Sigmoid colon (tissue), 7 donors: ENCODE measurements at regions of chr1 and their contacts with region 1.

Region 1: GRCh38 chr1:231421993-231422764 is at the start of gene EGLN1:
- DNase-seq: peak; percentile 91
- H3K4me3 ChIP-seq: peak within 1 kb of the TSS; percentile 66 to 90 (median 88)
- H3K27ac ChIP-seq: peak within 1 kb of the TSS; percentile 98 to 99 (median 98)
- H3K4me1 ChIP-seq: peaks cover 0 to 43% (median 36%) of the 10 kb centered on the region in 4 donors
- H3K27me3 ChIP-seq: no peaks in the 10 kb centered on the region
- CTCF ChIP-seq: no peak
- EP300 ChIP-seq: no peak
- POLR2A ChIP-seq: peak; percentile 50 to 61
- total RNA-seq, gene EGLN1: 37.8 to 51.7 (median 46.0) TPM

Region 2: DNA sequence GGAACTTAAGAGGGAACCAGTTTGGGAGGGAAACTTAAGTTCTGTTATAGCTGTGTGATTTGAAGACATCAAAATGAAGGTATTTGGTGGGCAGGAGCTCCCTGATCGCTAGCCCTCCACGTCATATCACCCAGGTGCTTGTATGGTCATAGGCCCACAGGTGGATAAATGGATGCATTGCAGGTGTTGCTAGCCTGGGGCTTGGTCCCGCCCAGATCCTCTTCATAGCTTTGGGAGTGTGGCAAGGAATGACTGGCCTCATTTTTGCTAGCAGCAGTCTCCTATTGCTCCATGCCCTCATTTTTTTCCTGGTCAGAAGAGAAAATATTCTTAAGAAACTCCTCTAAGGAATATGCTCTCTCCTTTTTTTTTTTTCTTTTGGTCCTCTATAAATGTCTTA is 169.8 kb before region 1 on chr1:
- intact Hi-C with region 1: no loop called
- DNase-seq: no peak
- H3K4me3 ChIP-seq: no peak overlapping the region
- H3K27ac ChIP-seq: no peak overlapping the region
- H3K4me1 ChIP-seq: no peaks in the 10 kb centered on the region
- H3K27me3 ChIP-seq: no peaks in the 10 kb centered on the region
- CTCF ChIP-seq: no peak
- EP300 ChIP-seq: no peak
- POLR2A ChIP-seq: no peak

Region 3: DNA sequence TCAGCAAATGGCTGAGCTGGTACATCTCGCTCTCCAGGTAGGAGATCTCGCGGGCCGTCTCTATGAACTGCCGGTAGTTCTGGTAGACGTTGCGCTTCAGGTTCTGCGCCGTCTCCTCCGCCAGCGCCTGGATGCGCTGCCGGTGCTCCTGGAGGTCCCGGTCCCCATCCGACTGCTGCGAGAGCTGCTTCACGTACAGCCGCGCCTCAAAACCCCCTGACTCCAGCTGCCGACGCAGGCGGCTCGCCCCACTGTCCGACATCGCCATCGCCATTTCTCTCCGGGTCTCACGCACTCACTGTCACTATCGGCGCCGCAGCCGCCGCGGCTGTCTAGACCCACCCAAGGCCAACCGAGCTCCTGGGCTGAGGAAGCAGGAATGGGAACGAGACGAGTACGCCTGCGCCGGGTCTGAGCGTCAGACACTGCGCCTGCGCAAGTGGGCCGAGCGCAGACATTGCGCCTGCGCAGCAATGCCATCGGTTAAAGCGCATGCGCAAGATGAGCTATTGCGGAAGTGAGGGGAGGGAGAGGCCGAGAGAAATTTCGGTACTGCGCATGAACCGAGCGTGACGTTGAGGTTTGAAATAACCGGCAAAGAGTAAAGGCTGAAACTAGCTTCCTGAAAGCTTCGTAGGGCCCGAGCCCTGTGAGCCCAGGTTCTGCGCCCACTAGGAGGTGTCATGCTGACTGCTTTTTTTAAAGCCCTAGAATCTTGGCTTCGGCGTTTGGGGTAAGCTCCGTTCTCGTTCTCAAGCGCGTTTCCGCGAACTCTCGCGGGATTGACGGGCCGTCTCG is 84.5 kb before region 1 on chr1 and contains the start of gene EXOC8:
- intact Hi-C with region 1: loop called (anchors 2 kb)
- DNase-seq: peak; percentile 97
- H3K4me3 ChIP-seq: peak within 1 kb of the TSS; percentile 69 to 94 (median 81)
- H3K27ac ChIP-seq: peak within 1 kb of the TSS; percentile 88 to 96 (median 92)
- H3K4me1 ChIP-seq: peaks cover 0 to 60% (median 52%) of the 10 kb centered on the region in 4 donors
- H3K27me3 ChIP-seq: no peaks in the 10 kb centered on the region
- CTCF ChIP-seq: no peak
- EP300 ChIP-seq: no peak
- POLR2A ChIP-seq: peak; percentile 86 to 87
- total RNA-seq, gene EXOC8: 9.5 to 11.7 (median 11.3) TPM

Region 4: DNA sequence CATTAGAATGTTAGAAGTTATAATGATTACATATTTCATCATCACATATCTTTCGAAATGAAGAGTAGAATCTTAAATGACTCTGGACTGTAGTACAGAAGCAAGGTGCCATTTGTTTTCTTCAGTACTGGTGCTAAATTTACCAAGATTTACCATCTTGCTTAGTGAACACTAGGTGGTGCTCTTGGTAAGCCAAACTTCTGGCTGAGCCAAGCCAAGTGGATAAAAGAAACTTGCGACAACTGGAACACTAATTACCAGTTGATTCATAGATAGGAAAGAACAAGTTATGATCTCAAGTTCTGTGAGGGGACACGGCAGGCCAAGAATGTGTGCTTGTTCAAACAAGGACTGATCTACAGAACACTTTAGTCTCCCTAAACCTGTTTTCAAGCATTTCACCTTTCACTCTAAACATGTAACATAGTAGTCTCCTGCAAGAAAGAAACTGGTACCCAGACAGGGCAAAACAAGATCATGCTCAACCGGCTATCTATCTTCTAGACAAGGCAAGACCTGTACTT is 64.3 kb before region 1 on chr1:
- intact Hi-C with region 1: loop called (anchors 2 kb)
- DNase-seq: peak; percentile 75
- H3K4me3 ChIP-seq: no peak overlapping the region
- H3K27ac ChIP-seq: peak overlapping the region in 3 of 4 donors; percentile 4 to 43 (median 33)
- H3K4me1 ChIP-seq: peaks cover 0 to 14% (median 8%) of the 10 kb centered on the region in 4 donors
- H3K27me3 ChIP-seq: no peaks in the 10 kb centered on the region
- CTCF ChIP-seq: peak; percentile 68 to 82 (median 71)
- EP300 ChIP-seq: no peak
- POLR2A ChIP-seq: no peak

Region 5: DNA sequence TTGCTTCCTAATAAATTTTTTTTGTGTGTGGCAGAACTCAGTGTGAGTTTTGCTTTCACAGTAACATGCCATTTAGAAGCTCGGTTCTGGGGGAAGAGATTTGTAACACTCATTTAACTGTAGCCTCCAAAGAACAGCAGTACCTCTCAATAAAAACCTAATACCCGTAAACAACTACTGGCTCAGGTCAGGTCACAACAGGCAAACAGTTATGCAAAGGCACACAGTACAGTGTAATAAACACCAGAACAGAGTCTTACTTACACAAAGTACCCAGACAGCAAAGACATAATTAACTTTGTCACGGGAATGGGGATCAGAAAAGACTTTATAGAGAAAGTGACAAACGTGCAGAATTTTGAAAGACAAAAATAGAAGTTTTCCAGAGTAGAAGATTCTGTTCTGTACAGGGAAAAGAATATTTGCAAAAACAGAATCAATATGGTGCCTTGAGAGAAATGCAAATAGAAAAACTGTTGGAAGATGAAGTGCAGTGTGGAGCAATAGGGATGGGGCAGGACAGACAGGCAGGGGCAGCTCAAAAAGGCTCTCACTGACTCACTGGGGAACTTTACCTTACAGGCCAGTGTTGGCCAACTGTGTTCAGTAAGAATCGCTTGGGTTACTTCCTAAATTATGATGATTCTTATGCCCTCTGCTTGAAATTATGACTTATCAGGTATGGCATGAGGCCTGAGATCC is 38.9 kb before region 1 on chr1:
- intact Hi-C with region 1: loop called (anchors 5 kb)
- DNase-seq: no peak
- H3K4me3 ChIP-seq: no peak overlapping the region
- H3K27ac ChIP-seq: peak overlapping the region in 2 of 4 donors; percentile 2 to 27
- H3K4me1 ChIP-seq: peaks cover 0 to 79% (median 32%) of the 10 kb centered on the region in 4 donors
- H3K27me3 ChIP-seq: no peaks in the 10 kb centered on the region
- CTCF ChIP-seq: no peak
- EP300 ChIP-seq: no peak
- POLR2A ChIP-seq: no peak

Region 6: GRCh38 chr1:231590453-231591198 is 168.4 kb after region 1 on chr1:
- intact Hi-C with region 1: loop called (anchors 5 kb)
- DNase-seq: peak; percentile 73
- H3K4me3 ChIP-seq: no peak overlapping the region
- H3K27ac ChIP-seq: peak overlapping the region in 3 of 4 donors; percentile 41 to 69 (median 61)
- H3K4me1 ChIP-seq: peaks cover 0 to 23% (median 14%) of the 10 kb centered on the region in 4 donors
- H3K27me3 ChIP-seq: no peaks in the 10 kb centered on the region
- CTCF ChIP-seq: peak; percentile 56 to 73 (median 61)
- EP300 ChIP-seq: peak in 2 of 4 donors; percentile 9 to 62
- POLR2A ChIP-seq: no peak